ENCODE measurements at regions of chr17 and their contacts with region 1.

Region 1: DNA sequence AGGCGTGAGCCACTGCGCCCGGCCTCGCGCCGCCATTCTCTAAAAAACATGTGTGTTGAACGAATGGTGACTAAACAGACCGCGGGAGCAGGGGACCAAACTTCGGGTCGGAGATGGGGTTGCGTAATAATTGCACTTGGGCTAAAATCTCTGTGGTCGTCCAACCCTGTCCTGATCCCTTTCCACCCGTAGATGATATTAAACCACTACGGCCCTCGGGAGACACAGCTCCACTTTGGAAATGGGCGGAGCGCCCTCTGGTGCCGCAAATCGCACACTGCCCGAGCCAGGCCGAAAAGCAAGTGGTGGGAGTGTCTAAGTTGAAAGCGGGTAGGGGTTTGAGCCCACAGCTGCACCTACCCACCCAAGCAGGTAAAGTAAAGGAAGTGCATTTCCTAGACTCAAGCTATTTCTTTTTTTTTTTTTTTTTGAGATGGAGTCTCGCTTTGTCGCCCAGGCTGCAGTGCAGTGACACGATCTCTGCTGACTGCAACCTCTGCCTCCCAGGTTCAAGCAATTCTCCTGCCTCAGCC is 17.0 kb downstream of the CAVIN1 start:
- DNase-seq: peak; percentile 80
- H3K4me3 ChIP-seq: no peak overlapping the region
- H3K27ac ChIP-seq: no peak overlapping the region
- H3K4me1 ChIP-seq: peaks cover 58% of the 10 kb centered on the region
- H3K27me3 ChIP-seq: no peaks in the 10 kb centered on the region
- CTCF ChIP-seq: peak; percentile 75 to 85
- POLR2A ChIP-seq: no peak

Region 2: DNA sequence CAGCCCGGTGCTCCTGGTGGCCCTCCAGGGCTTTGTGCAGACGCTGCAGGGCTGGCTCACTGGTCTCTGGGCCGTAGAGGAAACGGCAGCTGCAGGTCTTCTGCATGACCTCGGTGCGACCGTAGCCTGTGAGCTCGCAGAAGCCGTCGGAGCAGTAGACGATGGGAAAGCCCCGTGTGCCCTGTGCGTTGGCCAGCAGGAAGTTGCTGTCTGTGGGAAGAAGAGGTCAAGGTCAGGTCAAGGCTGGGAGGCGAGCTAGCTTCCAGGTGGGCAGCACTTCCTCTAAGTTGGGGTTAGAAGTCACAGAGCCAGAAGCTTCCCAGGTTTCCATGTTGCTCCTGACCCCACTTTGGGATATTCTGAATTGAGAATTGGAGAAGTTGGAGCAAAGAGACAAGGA is 227.2 kb before region 1 on chr17:
- CTCF ChIA-PET with region 1: no interaction called
- POLR2A ChIA-PET with region 1: no interaction called
- dilution Hi-C with region 1: no loop called
- intact Hi-C with region 1: no loop called
- DNase-seq: no peak
- H3K4me3 ChIP-seq: no peak overlapping the region
- H3K27ac ChIP-seq: no peak overlapping the region
- H3K4me1 ChIP-seq: peaks cover 10% of the 10 kb centered on the region
- H3K27me3 ChIP-seq: peaks cover 9 to 13% of the 10 kb centered on the region in 2 experiments
- CTCF ChIP-seq: no peak
- POLR2A ChIP-seq: no peak

Region 3: GRCh38 chr17:42312285-42313130 is 93.5 kb before region 1 on chr17:
- CTCF ChIA-PET with region 1: interaction called, 25 read pairs
- POLR2A ChIA-PET with region 1: interaction called, 3 read pairs
- dilution Hi-C with region 1: no loop called
- intact Hi-C with region 1: no loop called
- DNase-seq: peak; percentile 85
- H3K4me3 ChIP-seq: no peak overlapping the region
- H3K27ac ChIP-seq: no peak overlapping the region
- H3K4me1 ChIP-seq: peaks cover 43% of the 10 kb centered on the region
- H3K27me3 ChIP-seq: no peaks in the 10 kb centered on the region
- CTCF ChIP-seq: peak; percentile 67 to 88
- POLR2A ChIP-seq: no peak

Region 4: DNA sequence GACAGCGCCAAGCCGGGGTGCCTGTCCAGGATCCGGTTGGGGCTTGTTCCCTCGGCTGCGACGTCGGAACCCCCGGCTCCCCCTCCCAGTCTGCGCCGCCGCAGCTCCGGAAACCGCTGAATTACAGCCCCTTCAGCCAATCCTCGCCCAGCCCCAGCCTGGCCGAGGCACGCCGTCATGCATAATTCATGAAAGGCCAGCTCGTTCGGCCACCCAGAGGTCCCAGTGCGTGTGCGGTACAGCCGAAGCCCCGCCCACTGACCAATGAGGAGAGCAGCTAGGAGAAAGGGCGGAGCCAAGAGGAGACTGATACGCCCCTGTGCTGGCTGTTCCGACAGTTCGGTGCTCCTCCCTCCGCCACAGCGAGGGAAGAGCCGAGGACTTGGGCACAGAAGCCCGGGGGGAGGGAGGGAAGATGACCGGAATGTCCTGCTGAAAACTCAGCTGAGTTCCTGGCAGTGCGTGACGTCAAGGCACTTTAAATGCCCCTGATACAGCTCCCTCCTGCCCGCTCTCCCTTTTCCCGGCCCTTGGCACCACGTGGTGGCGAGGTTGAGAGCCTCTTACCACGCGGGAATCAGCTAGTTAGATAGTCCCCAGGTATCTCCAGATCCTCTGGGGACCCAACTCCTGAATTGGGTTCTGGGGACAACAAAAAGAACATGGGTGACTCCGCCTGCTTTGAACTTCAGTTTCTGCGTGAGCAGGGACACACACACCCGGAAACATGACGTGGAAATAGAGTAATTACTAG is 17.5 kb before region 1 on chr17 and contains the start of gene STAT3:
- CTCF ChIA-PET with region 1: interaction called, 30 read pairs
- POLR2A ChIA-PET with region 1: interaction called, 14 read pairs
- dilution Hi-C with region 1: no loop called
- intact Hi-C with region 1: loop called (anchors 1 kb)
- DNase-seq: peak; percentile 100
- H3K4me3 ChIP-seq: peak within 1 kb of the TSS; percentile 41 to 89 (median 55)
- H3K27ac ChIP-seq: peak within 1 kb of the TSS; percentile 98
- H3K4me1 ChIP-seq: peaks cover 21% of the 10 kb centered on the region
- H3K27me3 ChIP-seq: no peaks in the 10 kb centered on the region
- CTCF ChIP-seq: no peak
- POLR2A ChIP-seq: peak; percentile 84
- total RNA-seq, gene STAT3: 108 and 124 TPM in 2 replicates

Region 5: GRCh38 chr17:42422958-42423712 is 17.1 kb after region 1 on chr17 and contains the start of gene CAVIN1:
- CTCF ChIA-PET with region 1: interaction called, 73 read pairs
- POLR2A ChIA-PET with region 1: interaction called, 71 read pairs
- dilution Hi-C with region 1: no loop called
- intact Hi-C with region 1: loop called (anchors 1 kb)
- DNase-seq: peak; percentile 95
- H3K4me3 ChIP-seq: peak within 1 kb of the TSS; percentile 67 to 84 (median 79)
- H3K27ac ChIP-seq: peak within 1 kb of the TSS; percentile 80
- H3K4me1 ChIP-seq: peaks cover 24% of the 10 kb centered on the region
- H3K27me3 ChIP-seq: no peaks in the 10 kb centered on the region
- CTCF ChIP-seq: no peak
- POLR2A ChIP-seq: peak; percentile 99
- total RNA-seq, gene CAVIN1: 663 and 684 TPM in 2 replicates

Region 6: DNA sequence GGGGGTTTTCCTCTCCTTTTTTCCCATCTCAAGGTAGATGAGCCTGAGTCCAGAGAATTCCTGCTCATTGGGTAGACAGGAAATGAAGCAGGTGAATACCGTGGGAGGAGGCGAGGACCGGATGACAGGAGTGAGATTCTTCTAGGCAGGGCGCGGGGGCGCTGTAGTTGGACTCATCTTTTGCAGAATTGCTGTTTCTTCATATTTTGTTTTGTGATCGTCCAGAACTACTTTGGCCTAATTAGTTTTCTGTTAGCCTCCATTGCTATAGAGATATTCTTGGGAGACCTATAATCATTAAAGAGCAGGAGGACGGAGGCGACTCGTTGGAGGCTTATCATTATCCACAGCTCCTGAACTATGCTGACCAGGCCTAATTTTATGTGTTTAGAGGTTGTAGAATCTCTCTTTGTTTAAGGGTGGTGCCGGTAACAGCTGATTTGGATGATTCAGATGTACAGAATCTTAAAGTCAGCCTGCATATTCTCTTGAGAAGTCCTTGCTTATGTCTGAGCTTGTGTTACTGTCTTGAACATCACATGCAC is 53.3 kb after region 1 on chr17:
- CTCF ChIA-PET with region 1: no interaction called
- POLR2A ChIA-PET with region 1: no interaction called
- dilution Hi-C with region 1: no loop called
- intact Hi-C with region 1: loop called (anchors 5 kb)
- DNase-seq: no peak
- H3K4me3 ChIP-seq: peak overlapping the region; percentile 67 to 80 (median 78)
- H3K27ac ChIP-seq: peak overlapping the region; percentile 51
- H3K4me1 ChIP-seq: peaks cover 37% of the 10 kb centered on the region
- H3K27me3 ChIP-seq: no peaks in the 10 kb centered on the region
- CTCF ChIP-seq: peak; percentile 12 to 28
- POLR2A ChIP-seq: no peak

Measured in endothelial cell of umbilical vein (primary cell).